ENCODE measurements at regions of chr1 and their contacts with region 1.

Region 1: GRCh38 chr1:202184750-202185460 is 8.7 kb upstream of the LGR6 start:
- DNase-seq: peak; percentile 57 to 93 (median 82)
- ATAC-seq: peak; percentile 76 to 88 (median 84)
- H3K4me3 ChIP-seq: no peak overlapping the region
- H3K27ac ChIP-seq: no peak overlapping the region
- H3K4me1 ChIP-seq: no peaks in the 10 kb centered on the region
- H3K27me3 ChIP-seq: no peaks in the 10 kb centered on the region
- CTCF ChIP-seq: peak; percentile 75 to 90 (median 85)

Region 2: GRCh38 chr1:202105539-202106276 is 79.2 kb before region 1 on chr1:
- intact Hi-C with region 1: no loop called
- DNase-seq: peak in 4 of 6 donors; percentile 48 to 70 (median 61)
- ATAC-seq: peak in 1 of 4 donors; percentile 4
- H3K4me3 ChIP-seq: no peak overlapping the region
- H3K27ac ChIP-seq: peak overlapping the region; percentile 95 to 99 (median 98)
- H3K4me1 ChIP-seq: peaks cover 31 to 42% (median 36%) of the 10 kb centered on the region in 3 donors
- H3K27me3 ChIP-seq: no peaks in the 10 kb centered on the region
- CTCF ChIP-seq: no peak

Region 3: DNA sequence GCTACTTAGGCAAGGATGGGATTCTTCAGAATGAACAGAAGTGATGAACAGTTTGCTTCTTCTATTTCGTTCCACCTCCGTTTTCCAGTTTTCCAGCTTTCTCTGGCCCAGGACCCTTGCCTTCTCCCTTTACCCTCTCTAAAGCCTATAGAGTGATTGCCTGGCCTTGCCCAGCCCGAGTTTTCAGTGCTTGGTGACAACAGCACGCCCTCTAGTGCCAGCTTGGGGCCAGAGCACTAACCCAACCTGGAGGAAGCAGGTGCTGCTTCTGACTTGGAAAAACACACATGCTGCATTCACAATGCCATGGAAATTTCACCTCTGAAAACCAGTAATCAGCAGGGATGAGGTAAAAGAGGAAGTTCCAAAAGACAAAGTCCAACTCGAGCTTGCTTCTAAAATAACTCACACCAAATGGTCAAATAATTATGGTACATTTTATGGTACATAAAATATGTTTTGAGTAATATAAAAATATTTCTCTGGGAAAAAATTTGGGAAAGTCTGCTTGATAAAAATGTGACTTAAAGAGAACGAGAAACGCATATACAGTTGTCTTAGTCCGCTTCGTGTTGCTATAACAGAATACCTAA is 130.8 kb after region 1 on chr1:
- intact Hi-C with region 1: loop called in 2 of 3 experiments (anchors 5 kb)
- DNase-seq: peak; percentile 66 to 90 (median 82)
- ATAC-seq: peak; percentile 91 to 99 (median 96)
- H3K4me3 ChIP-seq: no peak overlapping the region
- H3K27ac ChIP-seq: no peak overlapping the region
- H3K4me1 ChIP-seq: no peaks in the 10 kb centered on the region
- H3K27me3 ChIP-seq: no peaks in the 10 kb centered on the region
- CTCF ChIP-seq: peak; percentile 61 to 90 (median 82)

Region 4: GRCh38 chr1:202716654-202717053 is 531.7 kb after region 1 on chr1:
- intact Hi-C with region 1: loop called in 2 of 3 experiments (anchors 5 to 10 kb)
- DNase-seq: no peak
- ATAC-seq: no peak
- H3K4me3 ChIP-seq: no peak overlapping the region
- H3K27ac ChIP-seq: no peak overlapping the region
- H3K4me1 ChIP-seq: no peaks in the 10 kb centered on the region
- H3K27me3 ChIP-seq: no peaks in the 10 kb centered on the region
- CTCF ChIP-seq: no peak

Region 5: DNA sequence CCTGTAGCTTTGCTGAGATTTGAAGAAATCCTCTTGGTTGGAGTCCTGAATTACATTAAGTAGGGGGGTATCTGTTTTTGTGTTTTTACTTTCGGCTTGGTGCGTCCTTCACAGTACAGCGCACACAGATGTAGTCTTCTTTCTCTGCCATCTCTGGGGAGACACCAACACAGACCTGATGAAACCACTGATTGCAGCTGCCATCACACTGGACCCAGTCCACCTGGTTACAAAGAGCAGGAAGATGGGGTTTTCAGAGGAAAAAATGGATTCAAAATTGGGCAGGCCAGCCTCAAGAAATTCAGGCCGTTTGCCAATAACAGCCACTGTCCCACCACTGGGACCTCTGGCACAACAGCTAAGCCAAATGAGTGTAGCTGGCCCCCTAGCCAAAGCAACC is 544.0 kb after region 1 on chr1:
- intact Hi-C with region 1: loop called in 1 of 3 experiments (anchors 10 kb)
- DNase-seq: no peak
- ATAC-seq: no peak
- H3K4me3 ChIP-seq: no peak overlapping the region
- H3K27ac ChIP-seq: no peak overlapping the region
- H3K4me1 ChIP-seq: no peaks in the 10 kb centered on the region
- H3K27me3 ChIP-seq: no peaks in the 10 kb centered on the region
- CTCF ChIP-seq: no peak